ENCODE measurements at regions of chr11 and their contacts with region 1.

Region 1: GRCh38 chr11:118051611-118052461 is 25.0 kb upstream of the TMPRSS4 start:
- DNase-seq: no peak
- ATAC-seq: peak; percentile 21 to 40 (median 30)
- H3K4me3 ChIP-seq: no peak overlapping the region
- H3K27ac ChIP-seq: peak overlapping the region in 1 of 12 donors; percentile 64
- H3K4me1 ChIP-seq: peaks cover 0 to 20% (median 0%) of the 10 kb centered on the region in 12 donors
- H3K27me3 ChIP-seq: no peaks in the 10 kb centered on the region
- CTCF ChIP-seq: no peak
- POLR2A ChIP-seq: no peak

Region 2: DNA sequence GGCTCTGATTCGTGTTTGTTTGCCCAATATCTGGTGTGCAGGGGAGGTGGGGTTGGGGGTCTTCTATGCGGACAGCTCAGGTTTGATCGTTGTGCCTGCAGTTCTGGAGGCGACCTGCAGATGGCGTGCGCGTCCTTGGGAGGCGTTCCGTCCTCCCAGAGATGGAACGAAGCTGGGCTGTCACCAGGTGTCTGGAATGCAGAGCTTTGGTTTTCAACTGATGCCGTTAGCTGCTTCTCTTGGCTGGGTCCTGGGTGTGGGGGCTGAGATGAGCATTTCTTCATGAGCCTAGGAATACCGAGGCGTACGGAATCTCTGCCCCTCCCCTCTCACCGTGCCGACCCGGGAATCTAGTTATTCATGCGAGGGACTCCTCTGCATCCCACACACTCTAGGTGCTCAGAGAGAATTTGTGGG is 625.6 kb before region 1 on chr11:
- intact Hi-C with region 1: loop called in 9 of 10 experiments (anchors 5 to 10 kb)
- DNase-seq: peak; percentile 46 to 79 (median 66)
- ATAC-seq: peak in 3 of 4 donors; percentile 56 to 72 (median 70)
- H3K4me3 ChIP-seq: no peak overlapping the region
- H3K27ac ChIP-seq: no peak overlapping the region
- H3K4me1 ChIP-seq: peaks cover 0 to 8% (median 1%) of the 10 kb centered on the region in 12 donors
- H3K27me3 ChIP-seq: no peaks in the 10 kb centered on the region
- CTCF ChIP-seq: peak; percentile 85 to 97 (median 94)
- POLR2A ChIP-seq: no peak

Region 3: GRCh38 chr11:117443266-117444195 is 608.3 kb before region 1 on chr11:
- intact Hi-C with region 1: loop called in 2 of 10 experiments (anchors 5 to 10 kb)
- DNase-seq: peak; percentile 49 to 82 (median 59)
- ATAC-seq: peak; percentile 84 to 97 (median 90)
- H3K4me3 ChIP-seq: peak overlapping the region in 4 of 12 donors; percentile 12 to 16 (median 12)
- H3K27ac ChIP-seq: no peak overlapping the region
- H3K4me1 ChIP-seq: peaks cover 0 to 15% (median 0%) of the 10 kb centered on the region in 12 donors
- H3K27me3 ChIP-seq: peaks cover 0 to 17% (median 0%) of the 10 kb centered on the region in 9 donors
- CTCF ChIP-seq: peak; percentile 33 to 72 (median 62)
- POLR2A ChIP-seq: no peak

Region 4: GRCh38 chr11:117817368-117818040 is 234.3 kb before region 1 on chr11:
- intact Hi-C with region 1: loop called in 4 of 10 experiments (anchors 2 to 5 kb)
- DNase-seq: peak; percentile 78 to 88 (median 80)
- ATAC-seq: peak; percentile 43 to 73 (median 67)
- H3K4me3 ChIP-seq: peak overlapping the region in 6 of 12 donors; percentile 7 to 47 (median 32)
- H3K27ac ChIP-seq: peak overlapping the region in 6 of 12 donors; percentile 28 to 75 (median 42)
- H3K4me1 ChIP-seq: peaks cover 0 to 60% (median 28%) of the 10 kb centered on the region in 12 donors
- H3K27me3 ChIP-seq: no peaks in the 10 kb centered on the region
- CTCF ChIP-seq: peak; percentile 97 to 100 (median 99)
- POLR2A ChIP-seq: no peak

Region 5: DNA sequence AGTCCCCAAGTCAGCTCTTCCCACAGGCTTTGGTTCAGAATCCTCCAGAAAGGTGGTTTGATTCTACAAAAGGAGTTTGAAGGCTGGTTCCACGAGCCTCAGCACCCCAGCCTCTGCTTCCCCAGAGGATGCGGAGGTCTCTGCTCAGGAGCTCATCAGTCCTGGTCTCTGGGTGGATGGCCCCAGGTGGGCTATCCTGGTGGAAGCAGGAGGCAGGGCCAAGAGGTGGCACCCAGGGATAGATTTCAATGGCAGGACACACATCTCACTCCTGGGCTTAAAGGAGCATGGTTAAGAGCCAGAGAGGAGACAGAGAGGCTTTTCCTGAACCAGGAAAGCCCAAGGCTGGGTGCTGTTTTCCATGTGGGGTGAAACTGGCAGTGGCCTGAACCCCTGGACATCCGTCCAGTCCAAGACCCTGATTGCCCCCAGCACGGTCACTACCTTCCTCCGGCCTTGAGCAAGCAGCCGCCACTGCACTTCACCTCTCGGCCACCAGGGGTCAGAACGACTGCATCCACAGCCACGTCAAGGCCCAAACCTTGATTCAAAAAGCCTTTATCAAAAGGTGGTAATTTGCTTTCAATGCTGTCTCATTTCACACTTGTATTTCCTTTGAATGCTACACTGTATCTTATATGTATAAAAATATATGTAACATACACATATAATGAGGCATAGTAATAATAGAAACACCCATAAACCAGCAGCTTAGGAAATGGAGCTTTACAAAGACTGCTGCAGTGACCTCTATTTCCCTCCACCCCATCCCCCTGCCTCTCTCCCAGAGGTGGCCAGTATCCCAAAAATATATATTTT is 208.0 kb before region 1 on chr11:
- intact Hi-C with region 1: loop called in 7 of 10 experiments (anchors 2 to 10 kb)
- DNase-seq: peak; percentile 77 to 90 (median 83)
- ATAC-seq: peak in 3 of 4 donors; percentile 76 to 83 (median 81)
- H3K4me3 ChIP-seq: no peak overlapping the region
- H3K27ac ChIP-seq: peak overlapping the region in 2 of 12 donors; percentile 16 to 20
- H3K4me1 ChIP-seq: peaks cover 0 to 23% (median 9%) of the 10 kb centered on the region in 12 donors
- H3K27me3 ChIP-seq: no peaks in the 10 kb centered on the region
- CTCF ChIP-seq: peak; percentile 97 to 100 (median 99)
- POLR2A ChIP-seq: no peak

Region 6: DNA sequence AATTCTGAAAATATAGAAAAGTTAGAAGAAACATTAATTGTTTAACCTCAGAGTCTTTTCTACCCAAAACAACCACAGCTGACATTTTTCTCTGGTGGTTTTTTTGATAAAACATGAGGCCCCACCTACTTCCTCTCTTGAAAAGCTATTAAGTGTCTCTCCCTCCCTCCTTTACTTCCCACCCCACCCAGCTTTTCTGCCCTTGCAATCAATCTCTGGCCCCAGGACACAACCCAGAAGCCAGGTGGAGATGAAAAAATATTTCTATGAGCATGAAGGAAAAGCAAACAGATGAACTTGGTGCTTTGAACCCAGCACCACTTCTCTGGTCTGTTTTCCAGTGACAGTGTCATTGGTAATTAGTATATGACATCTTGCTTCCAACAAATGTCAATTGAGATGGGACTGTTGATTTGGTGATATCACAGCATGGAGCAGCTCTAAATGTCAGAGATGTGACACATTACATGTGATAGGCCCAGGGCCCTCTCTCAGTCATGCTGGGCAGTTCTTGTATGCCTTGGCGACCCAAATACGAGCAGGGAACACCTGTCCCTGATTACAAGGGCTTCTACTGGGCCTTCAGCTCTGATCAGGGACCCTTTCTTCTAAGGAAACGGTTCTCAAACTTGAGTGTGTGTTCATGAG is 98.7 kb before region 1 on chr11:
- intact Hi-C with region 1: loop called in 9 of 10 experiments (anchors 2 to 5 kb)
- DNase-seq: no peak
- ATAC-seq: peak in 1 of 4 donors; percentile 44
- H3K4me3 ChIP-seq: no peak overlapping the region
- H3K27ac ChIP-seq: peak overlapping the region in 1 of 12 donors; percentile 83
- H3K4me1 ChIP-seq: peaks cover 0 to 55% (median 2%) of the 10 kb centered on the region in 12 donors
- H3K27me3 ChIP-seq: peaks cover 0 to 5% (median 0%) of the 10 kb centered on the region in 9 donors
- CTCF ChIP-seq: no peak
- POLR2A ChIP-seq: no peak

Region 7: DNA sequence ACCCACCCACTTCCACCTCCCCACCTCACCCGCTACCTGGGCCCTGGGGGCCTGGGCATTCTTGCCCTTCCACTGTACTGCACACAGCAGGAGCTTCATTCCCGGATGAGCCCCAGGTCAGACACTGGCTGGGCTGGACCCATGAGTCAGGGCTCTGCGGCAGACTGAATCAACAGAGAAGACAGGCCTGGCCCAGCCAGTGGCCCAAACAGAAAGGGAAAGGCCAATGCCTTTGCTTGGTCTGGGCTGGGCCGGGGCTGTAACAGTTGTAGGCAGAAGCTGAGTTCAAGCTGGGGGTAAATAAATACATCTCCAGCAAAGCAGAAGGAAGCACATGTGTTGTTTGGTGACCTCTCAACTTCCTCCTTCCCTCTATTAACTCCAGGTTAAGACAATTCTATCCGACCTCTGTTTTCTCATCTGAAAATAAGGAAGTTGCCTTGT is 36.7 kb after region 1 on chr11:
- intact Hi-C with region 1: no loop called
- DNase-seq: peak in 4 of 5 donors; percentile 29 to 74 (median 42)
- ATAC-seq: peak in 3 of 4 donors; percentile 26 to 58 (median 50)
- H3K4me3 ChIP-seq: no peak overlapping the region
- H3K27ac ChIP-seq: peak overlapping the region in 2 of 12 donors; percentile 13 to 70
- H3K4me1 ChIP-seq: peaks cover 0 to 33% (median 12%) of the 10 kb centered on the region in 12 donors
- H3K27me3 ChIP-seq: no peaks in the 10 kb centered on the region
- CTCF ChIP-seq: no peak
- POLR2A ChIP-seq: no peak